ENCODE measurements at regions of chr19 and their contacts with region 1.

Region 1: GRCh38 chr19:41928221-41928683 is at the start of gene ERFL:
- DNase-seq: peak in 1 of 5 donors; percentile 28
- H3K4me3 ChIP-seq: peak within 1 kb of the TSS; percentile 57 to 74
- H3K4me3 Mint-ChIP-seq: peak within 1 kb of the TSS; percentile 86 to 98 (median 94)
- H3K27ac ChIP-seq: peak within 1 kb of the TSS; percentile 33
- H3K27ac Mint-ChIP-seq: peak within 1 kb of the TSS; percentile 75 to 96 (median 89)
- H3K4me1 ChIP-seq: peaks cover 27% of the 10 kb centered on the region
- H3K4me1 Mint-ChIP-seq: peaks cover 18 to 37% (median 23%) of the 10 kb centered on the region in 4 donors
- H3K27me3 ChIP-seq: no peaks in the 10 kb centered on the region
- H3K27me3 Mint-ChIP-seq: no peaks in the 10 kb centered on the region
- total RNA-seq, gene ERFL: 6.6 to 9.2 TPM

Region 2: GRCh38 chr19:41746593-41747227 is 181.5 kb before region 1 on chr19:
- CTCF ChIA-PET with region 1: no interaction called
- POLR2A ChIA-PET with region 1: no interaction called
- intact Hi-C with region 1: no loop called
- DNase-seq: peak; percentile 37 to 50 (median 46)
- H3K4me3 ChIP-seq: no peak overlapping the region
- H3K4me3 Mint-ChIP-seq: no peak overlapping the region
- H3K27ac ChIP-seq: no peak overlapping the region
- H3K27ac Mint-ChIP-seq: no peak overlapping the region
- H3K4me1 ChIP-seq: no peaks in the 10 kb centered on the region
- H3K4me1 Mint-ChIP-seq: peaks cover 0 to 3% (median 1%) of the 10 kb centered on the region in 4 donors
- H3K27me3 ChIP-seq: no peaks in the 10 kb centered on the region
- H3K27me3 Mint-ChIP-seq: peaks cover 36 to 37% of the 10 kb centered on the region in 2 donors

Region 3: DNA sequence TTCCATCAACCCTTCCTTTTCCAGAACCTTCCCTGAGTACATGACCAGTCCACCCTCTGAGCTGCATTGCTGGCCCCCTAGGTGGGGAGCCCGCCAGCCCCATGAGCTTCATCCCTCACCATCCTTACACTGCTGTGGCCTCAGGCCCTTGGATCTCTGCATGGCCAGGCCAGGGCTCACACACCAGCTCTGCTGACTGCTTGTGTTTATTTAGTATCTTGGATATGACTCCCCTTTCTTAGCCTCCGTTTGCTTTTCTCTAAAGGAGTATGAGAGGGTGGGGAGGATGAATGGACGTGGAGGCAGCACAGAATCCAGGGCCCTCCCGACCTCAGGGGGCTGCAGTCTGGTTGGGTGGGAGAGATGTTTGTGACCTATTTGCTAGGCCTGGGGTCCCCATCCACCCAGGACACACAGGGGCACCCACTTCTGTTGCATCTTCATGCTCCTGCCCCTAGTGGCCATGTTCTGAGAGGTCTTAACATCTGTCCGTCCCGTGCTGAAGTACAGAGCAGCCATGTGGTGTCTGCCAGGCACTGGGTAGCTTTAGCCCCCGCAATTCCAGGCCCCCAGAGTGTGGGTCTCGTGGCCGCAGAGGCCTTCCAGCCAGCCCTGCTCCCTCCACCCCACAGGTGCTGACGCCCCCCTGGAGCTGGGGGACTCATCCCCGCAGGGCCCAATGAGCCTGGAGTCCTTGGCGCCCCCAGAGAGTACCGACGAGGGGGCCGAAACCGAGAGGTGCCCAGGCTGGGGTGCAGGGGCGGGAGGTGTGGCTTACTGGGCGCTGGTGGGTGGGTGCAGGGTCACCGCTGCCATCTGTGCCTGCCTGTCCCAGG is 32.3 kb before region 1 on chr19:
- CTCF ChIA-PET with region 1: no interaction called
- POLR2A ChIA-PET with region 1: interaction called, 156 read pairs
- intact Hi-C with region 1: no loop called
- DNase-seq: no peak
- H3K4me3 ChIP-seq: no peak overlapping the region
- H3K4me3 Mint-ChIP-seq: peak overlapping the region in 4 of 8 donors; percentile 10 to 49 (median 42)
- H3K27ac ChIP-seq: peak overlapping the region; percentile 16
- H3K27ac Mint-ChIP-seq: peak overlapping the region; percentile 46 to 90 (median 85)
- H3K4me1 ChIP-seq: peaks cover 52% of the 10 kb centered on the region
- H3K4me1 Mint-ChIP-seq: peaks cover 23 to 62% (median 36%) of the 10 kb centered on the region in 4 donors
- H3K27me3 ChIP-seq: no peaks in the 10 kb centered on the region
- H3K27me3 Mint-ChIP-seq: no peaks in the 10 kb centered on the region

Region 4: GRCh38 chr19:41912899-41913537 is 15.2 kb before region 1 on chr19:
- CTCF ChIA-PET with region 1: no interaction called
- POLR2A ChIA-PET with region 1: interaction called, 33 read pairs
- intact Hi-C with region 1: loop called (anchors 2 kb)
- DNase-seq: peak in 2 of 5 donors; percentile 39 to 43
- H3K4me3 ChIP-seq: no peak overlapping the region
- H3K4me3 Mint-ChIP-seq: peak overlapping the region in 4 of 8 donors; percentile 9 to 57 (median 32)
- H3K27ac ChIP-seq: no peak overlapping the region
- H3K27ac Mint-ChIP-seq: peak overlapping the region in 3 of 7 donors; percentile 43 to 75 (median 67)
- H3K4me1 ChIP-seq: peaks cover 45% of the 10 kb centered on the region
- H3K4me1 Mint-ChIP-seq: peaks cover 25 to 51% (median 26%) of the 10 kb centered on the region in 4 donors
- H3K27me3 ChIP-seq: peaks cover 23% of the 10 kb centered on the region
- H3K27me3 Mint-ChIP-seq: peaks cover 7 to 14% of the 10 kb centered on the region in 2 donors

Measured in CD4-positive, alpha-beta memory T cell (primary cell).